PC-9 (cell line): ENCODE measurements at regions of chr6 and their contacts with region 1.

Region 1: DNA sequence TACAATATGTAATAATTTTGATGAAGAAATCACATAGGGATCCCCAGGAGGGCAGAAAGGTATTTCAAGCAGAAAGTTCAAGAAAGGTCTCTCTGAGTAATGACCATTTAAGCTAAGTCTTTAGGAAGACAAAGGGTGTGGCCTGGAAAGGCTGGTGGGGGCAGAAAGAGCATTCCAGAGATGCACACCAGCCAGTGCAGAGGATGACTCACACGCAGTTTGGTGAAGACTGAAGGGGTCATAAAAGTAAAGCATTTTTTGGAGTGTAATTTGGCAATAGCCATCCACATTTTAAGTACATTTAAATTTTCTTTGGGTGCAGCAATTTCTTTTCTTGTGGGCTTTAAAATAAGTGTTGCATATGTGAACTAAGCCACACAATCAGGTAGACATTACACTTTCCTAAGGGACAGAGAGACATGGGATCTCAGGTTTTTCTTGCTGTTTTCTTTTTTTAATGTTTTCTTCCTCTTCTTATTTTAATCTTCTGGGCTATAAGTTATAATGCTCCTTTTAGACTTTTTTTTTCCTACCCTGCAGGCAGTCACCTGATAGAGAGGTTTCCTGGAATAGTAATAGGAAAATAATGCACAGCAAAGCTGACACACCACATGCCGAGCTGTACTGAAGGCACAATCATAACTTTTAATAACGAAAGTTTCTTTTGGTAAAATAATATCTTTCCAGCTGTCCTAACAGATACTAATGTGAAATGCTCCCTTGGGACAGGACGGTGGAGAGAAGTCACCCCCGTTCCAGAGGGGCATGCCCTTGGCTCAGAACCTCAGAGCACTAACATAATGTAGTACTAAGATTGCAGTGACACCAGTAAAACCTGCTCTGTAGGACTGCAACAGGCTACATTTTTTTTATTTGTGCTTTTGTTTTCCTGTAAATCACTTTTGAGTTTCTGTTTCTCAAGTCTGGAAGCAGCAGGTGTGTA is 49.6 kb upstream of the PTPRK start:
- DNase-seq: peak; percentile 74 to 100
- H3K4me3 ChIP-seq: peak overlapping the region; percentile 41; the same call in 1 of the 2 replicates
- H3K27ac ChIP-seq: peak overlapping the region; percentile 93
- H3K4me1 ChIP-seq: peaks cover 49% of the 10 kb centered on the region
- H3K27me3 ChIP-seq: no peaks in the 10 kb centered on the region
- CTCF ChIP-seq: no peak

Region 2: DNA sequence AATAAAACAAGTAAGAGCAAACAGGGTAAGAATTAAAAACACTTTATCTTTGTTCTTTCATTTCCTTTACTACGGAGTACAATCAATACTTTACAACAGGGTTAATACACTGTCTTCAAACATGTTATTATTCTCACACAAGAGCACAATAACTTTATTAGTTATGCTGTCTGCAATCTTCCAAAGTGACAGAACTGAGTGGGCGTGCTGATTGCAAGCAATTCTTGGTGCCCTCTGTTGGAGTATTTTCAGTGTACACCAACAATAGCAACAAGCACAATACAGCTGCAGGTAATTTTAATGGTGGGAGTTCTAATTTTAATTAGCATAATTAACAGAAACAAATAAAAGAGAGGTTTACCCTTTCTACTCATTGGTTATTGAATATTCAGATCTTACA is 15.7 kb before region 1 on chr6:
- CTCF ChIA-PET with region 1: no interaction called
- POLR2A ChIA-PET with region 1: no interaction called
- intact Hi-C with region 1: no loop called
- DNase-seq: no peak
- H3K4me3 ChIP-seq: no peak overlapping the region
- H3K27ac ChIP-seq: no peak overlapping the region
- H3K4me1 ChIP-seq: no peaks in the 10 kb centered on the region
- H3K27me3 ChIP-seq: no peaks in the 10 kb centered on the region
- CTCF ChIP-seq: no peak; the same call in 1 of the 2 replicates

Region 3: GRCh38 chr6:128586095-128586494 is 16.1 kb after region 1 on chr6:
- CTCF ChIA-PET with region 1: no interaction called
- POLR2A ChIA-PET with region 1: no interaction called
- intact Hi-C with region 1: no loop called
- DNase-seq: no peak
- H3K4me3 ChIP-seq: no peak overlapping the region
- H3K27ac ChIP-seq: no peak overlapping the region
- H3K4me1 ChIP-seq: no peaks in the 10 kb centered on the region
- H3K27me3 ChIP-seq: no peaks in the 10 kb centered on the region
- CTCF ChIP-seq: no peak

Region 4: GRCh38 chr6:128600397-128600951 is 30.5 kb after region 1 on chr6:
- CTCF ChIA-PET with region 1: no interaction called
- POLR2A ChIA-PET with region 1: no interaction called
- intact Hi-C with region 1: loop called (anchors 1 kb)
- DNase-seq: peak; percentile 47 to 78
- H3K4me3 ChIP-seq: no peak overlapping the region
- H3K27ac ChIP-seq: peak overlapping the region; percentile 81
- H3K4me1 ChIP-seq: peaks cover 52% of the 10 kb centered on the region
- H3K27me3 ChIP-seq: no peaks in the 10 kb centered on the region
- CTCF ChIP-seq: no peak

Region 5: DNA sequence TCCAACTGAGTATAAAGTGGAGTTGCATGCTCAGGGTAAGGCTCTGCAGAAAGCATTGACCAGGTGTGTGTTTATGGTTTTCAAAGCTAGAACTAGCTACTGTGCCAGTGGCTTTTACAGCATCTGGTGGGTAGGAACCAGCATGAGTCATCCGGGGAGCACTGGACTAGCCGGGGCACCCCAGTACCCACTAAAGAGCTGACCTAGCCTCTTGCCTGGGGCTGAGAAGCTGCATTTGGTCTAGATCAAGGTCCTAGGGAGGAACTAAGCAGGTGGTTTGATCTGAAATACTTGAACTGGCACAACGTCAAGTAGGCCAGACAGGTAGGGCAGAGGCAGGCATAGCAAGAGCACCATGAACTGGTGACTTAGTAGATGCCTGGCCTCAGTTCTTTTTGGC is 60.2 kb after region 1 on chr6:
- CTCF ChIA-PET with region 1: no interaction called
- POLR2A ChIA-PET with region 1: no interaction called
- intact Hi-C with region 1: loop called (anchors 1 kb)
- DNase-seq: peak; percentile 75 to 95
- H3K4me3 ChIP-seq: no peak overlapping the region
- H3K27ac ChIP-seq: peak overlapping the region; percentile 44
- H3K4me1 ChIP-seq: peaks cover 47% of the 10 kb centered on the region
- H3K27me3 ChIP-seq: no peaks in the 10 kb centered on the region
- CTCF ChIP-seq: no peak

Region 6: GRCh38 chr6:128655978-128656498 is 86.0 kb after region 1 on chr6:
- CTCF ChIA-PET with region 1: no interaction called
- POLR2A ChIA-PET with region 1: interaction called, 3 read pairs
- intact Hi-C with region 1: loop called (anchors 1 kb)
- DNase-seq: peak; percentile 56 to 97
- H3K4me3 ChIP-seq: peak overlapping the region; percentile 1; the same call in 1 of the 2 replicates
- H3K27ac ChIP-seq: peak overlapping the region; percentile 89
- H3K4me1 ChIP-seq: peaks cover 43% of the 10 kb centered on the region
- H3K27me3 ChIP-seq: no peaks in the 10 kb centered on the region
- CTCF ChIP-seq: no peak

Region 7: DNA sequence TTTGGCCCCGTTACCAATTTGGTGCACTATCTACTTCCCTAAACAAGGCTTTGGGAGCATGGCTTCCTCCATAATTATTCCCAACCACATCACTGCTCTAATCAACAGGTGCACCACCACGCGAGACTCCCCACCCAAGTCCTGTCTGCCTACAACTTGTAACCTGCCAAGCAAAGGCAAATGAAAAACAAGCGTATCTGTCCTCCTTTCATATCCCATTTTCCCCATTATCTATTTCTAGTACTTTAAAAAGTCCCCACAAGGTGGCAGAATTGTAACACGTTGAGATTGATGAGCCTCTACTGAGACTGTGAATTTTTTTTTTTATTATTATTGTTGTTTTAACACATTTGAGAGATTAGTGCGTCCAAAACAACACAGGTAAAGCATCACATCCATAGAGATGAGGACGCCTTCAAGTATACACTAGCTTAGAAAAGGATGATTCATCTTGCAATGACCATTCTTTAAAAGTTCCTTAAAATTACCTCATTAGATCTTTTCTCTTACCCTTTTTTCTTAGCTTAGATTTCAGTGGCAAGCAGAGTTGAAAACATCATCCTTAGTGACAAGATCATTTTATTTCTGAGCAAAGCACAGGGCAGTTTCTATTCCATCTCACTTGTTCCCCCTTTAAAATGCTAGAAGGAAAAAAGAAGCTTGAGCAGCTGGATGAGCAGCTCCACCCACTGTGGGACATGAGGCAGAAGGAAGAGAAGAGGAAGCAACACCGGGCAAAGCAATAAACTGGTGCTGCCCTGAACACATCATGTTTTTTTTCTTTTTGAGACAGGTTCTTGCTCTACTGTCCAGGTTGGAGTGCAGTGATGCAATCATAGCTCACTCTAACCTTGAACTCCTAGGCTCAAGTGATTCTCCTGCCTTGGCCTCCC is 929.2 kb after region 1 on chr6:
- CTCF ChIA-PET with region 1: interaction called, 4 read pairs
- POLR2A ChIA-PET with region 1: no interaction called
- intact Hi-C with region 1: loop called (anchors 10 kb)
- DNase-seq: peak in 1 of 2 experiments; percentile 57
- H3K4me3 ChIP-seq: peak overlapping the region; percentile 15; the same call in 1 of the 2 replicates
- H3K27ac ChIP-seq: no peak overlapping the region
- H3K4me1 ChIP-seq: peaks cover 25% of the 10 kb centered on the region
- H3K27me3 ChIP-seq: no peaks in the 10 kb centered on the region
- CTCF ChIP-seq: peak; percentile 96